SK-N-SH (cell line): ENCODE measurements at regions of chr9 and their contacts with region 1.

Region 1: GRCh38 chr9:137034863-137035761 is 3.2 kb upstream of the FUT7 start:
- DNase-seq: peak; percentile 93
- H3K4me3 ChIP-seq: peak overlapping the region in 1 of 2 experiments; percentile 20; a peak in 1 of 4 replicates
- H3K27ac ChIP-seq: peak overlapping the region in 1 of 2 experiments; percentile 39; a peak in 1 of 4 replicates
- H3K4me1 ChIP-seq: peaks cover 0 to 21% of the 10 kb centered on the region in 2 experiments; a peak in 1 of 4 replicates
- H3K27me3 ChIP-seq: no peaks in the 10 kb centered on the region
- CTCF ChIP-seq: peak; percentile 81
- EP300 ChIP-seq: no peak
- RAD21 ChIP-seq: peak; percentile 85

Region 2: GRCh38 chr9:136564379-136564988 is 470.6 kb before region 1 on chr9:
- CTCF ChIA-PET with region 1: no interaction called
- POLR2A ChIA-PET with region 1: no interaction called
- DNase-seq: no peak
- H3K4me3 ChIP-seq: no peak overlapping the region
- H3K27ac ChIP-seq: no peak overlapping the region
- H3K4me1 ChIP-seq: peaks cover 9 to 13% of the 10 kb centered on the region in 2 experiments; a peak in 3 of 4 replicates
- H3K27me3 ChIP-seq: no peaks in the 10 kb centered on the region
- CTCF ChIP-seq: no peak
- EP300 ChIP-seq: no peak
- RAD21 ChIP-seq: no peak

Region 3: DNA sequence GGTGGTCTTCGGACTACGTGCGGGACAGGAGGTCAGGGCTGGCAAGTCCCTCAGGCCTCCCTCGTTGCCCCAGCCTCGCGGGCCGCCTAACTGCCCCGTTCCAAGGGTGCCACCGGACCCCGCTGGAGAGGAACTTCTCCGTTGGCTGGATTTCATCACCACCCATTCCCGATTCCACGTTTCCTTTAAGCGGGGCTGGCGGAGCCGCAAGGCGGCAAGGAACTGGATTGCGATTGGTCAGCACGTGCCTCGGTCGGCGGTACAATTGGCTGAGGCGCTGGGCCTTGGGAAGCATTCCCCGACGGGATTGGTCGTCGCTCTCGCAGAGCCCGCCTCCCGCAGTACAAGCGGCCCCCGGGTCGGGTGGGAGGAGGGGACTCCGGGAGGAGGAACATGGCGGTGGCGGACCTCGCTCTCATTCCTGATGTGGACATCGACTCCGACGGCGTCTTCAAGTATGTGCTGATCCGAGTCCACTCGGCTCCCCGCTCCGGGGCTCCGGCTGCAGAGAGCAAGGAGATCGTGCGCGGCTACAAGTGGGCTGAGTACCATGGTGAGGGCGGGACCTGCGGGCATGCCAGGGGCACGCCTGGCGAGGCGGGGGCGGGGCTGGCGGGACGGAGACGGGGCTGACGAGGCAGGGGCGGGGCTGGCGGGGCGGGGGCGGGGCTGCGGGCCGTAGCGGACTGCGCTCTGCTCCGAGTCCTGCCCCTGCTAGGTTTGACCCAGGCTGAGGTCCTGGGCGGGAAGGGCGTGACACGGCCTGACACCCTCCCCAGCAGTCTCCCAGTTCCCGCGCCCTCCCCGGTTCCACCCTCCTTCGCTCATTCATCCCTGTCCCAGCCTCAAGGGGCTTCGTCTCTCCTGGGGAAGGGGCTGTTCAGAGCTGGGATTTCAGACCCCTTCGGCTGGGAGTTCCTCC is 185.8 kb before region 1 on chr9 and contains the start of gene PHPT1:
- CTCF ChIA-PET with region 1: interaction called, 21 read pairs
- POLR2A ChIA-PET with region 1: no interaction called
- DNase-seq: peak; percentile 99
- H3K4me3 ChIP-seq: peak within 1 kb of the TSS; percentile 89 to 97
- H3K27ac ChIP-seq: peak within 1 kb of the TSS; percentile 84 to 98
- H3K4me1 ChIP-seq: peaks cover 4 to 13% of the 10 kb centered on the region in 2 experiments; a peak in 2 of 4 replicates
- H3K27me3 ChIP-seq: no peaks in the 10 kb centered on the region
- CTCF ChIP-seq: no peak
- EP300 ChIP-seq: no peak
- RAD21 ChIP-seq: no peak
- polyA plus RNA-seq, gene PHPT1: 338 and 517 TPM in 2 replicates

Region 4: GRCh38 chr9:136981588-136982231 is 53.4 kb before region 1 on chr9:
- CTCF ChIA-PET with region 1: interaction called, 14 read pairs
- POLR2A ChIA-PET with region 1: no interaction called
- DNase-seq: no peak
- H3K4me3 ChIP-seq: no peak overlapping the region
- H3K27ac ChIP-seq: no peak overlapping the region
- H3K4me1 ChIP-seq: peaks cover 0 to 15% of the 10 kb centered on the region in 2 experiments; a peak in 1 of 4 replicates
- H3K27me3 ChIP-seq: no peaks in the 10 kb centered on the region
- CTCF ChIP-seq: no peak
- EP300 ChIP-seq: no peak
- RAD21 ChIP-seq: no peak

Region 5: DNA sequence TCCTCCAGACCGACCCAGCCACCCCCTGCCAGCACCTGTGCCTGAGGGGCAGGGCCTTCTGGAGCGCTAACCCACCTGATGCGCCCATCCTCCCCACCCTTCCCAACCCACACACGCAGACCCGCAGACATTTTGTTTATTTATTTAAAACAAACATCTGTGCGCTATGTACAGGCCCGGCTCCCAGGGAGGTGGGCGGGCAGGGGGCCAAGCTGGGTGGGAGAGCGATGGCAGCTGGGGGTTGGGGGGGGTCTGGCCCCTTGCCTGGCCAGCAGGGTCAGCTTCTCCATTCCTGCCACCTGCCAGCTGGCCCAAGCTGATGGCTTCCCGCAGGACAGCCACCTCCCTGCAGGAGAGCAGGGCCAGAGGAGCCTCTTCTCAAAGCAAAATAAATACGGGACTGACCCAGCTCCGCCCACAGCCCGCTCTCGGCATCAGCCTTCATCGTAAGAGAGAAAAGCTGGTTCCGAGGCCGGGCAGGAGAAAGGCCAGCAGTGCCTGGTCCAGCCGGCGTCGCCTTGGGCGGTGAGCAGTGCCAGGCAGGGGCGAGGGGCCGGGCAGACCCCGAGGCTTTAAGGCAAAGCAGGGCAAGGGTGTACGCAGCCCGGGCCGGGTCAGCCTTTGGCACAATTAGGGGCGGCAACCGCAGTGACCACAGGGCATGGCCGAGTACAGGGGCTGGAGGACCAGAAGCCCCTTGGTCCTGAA is 27.9 kb before region 1 on chr9:
- CTCF ChIA-PET with region 1: interaction called, 14 read pairs
- POLR2A ChIA-PET with region 1: no interaction called
- DNase-seq: no peak
- H3K4me3 ChIP-seq: no peak overlapping the region
- H3K27ac ChIP-seq: no peak overlapping the region; a peak in 1 of 4 replicates
- H3K4me1 ChIP-seq: no peaks in the 10 kb centered on the region
- H3K27me3 ChIP-seq: no peaks in the 10 kb centered on the region
- CTCF ChIP-seq: no peak
- EP300 ChIP-seq: no peak
- RAD21 ChIP-seq: no peak

Region 6: DNA sequence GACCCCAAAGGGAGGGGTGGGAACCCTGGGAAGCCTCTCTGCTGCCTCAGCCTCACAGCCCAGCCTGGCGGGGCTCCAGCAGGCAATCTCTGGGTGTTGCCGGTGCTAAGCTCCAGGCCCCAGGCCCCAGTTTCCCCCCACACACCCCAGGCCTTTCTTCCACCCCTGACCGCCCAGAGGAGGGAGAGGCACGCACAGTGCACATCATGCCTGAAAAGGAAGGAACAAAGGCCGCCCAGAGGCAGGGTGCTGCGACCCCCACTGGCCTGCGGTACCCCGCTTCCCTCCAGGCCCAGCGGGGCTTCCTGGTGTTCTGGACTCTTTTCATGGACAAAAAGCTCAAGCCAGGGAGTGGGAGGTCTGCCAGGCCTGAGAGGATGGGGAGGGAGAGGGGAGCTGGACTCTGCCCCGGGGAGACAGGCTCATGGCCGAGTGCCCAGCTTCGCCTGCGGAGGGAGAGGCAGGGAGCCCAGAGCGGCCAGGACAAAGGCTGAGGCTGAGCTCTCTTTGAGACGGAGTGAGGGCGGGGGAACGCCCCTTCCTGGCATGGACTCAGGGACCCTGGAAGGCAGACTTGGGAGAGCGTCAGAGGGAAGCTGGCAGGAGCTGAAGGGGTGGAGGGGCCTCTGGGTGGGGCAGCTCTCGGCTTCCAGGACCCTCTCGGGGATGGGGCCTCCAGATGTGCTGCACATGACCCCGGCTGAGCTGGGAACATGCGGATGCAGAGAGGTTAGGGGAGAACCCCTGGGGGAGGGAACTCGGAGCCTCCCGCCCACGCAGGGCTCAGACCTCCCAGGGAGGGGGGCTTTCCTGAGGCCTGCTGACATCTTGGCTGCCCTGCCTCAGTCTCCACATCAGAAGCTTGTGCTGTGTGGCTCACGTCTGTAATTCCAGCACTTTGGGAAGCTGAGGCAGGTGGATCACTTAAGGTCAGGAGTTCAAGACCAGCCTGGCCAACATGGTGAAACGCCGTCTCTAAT is 20.6 kb after region 1 on chr9:
- CTCF ChIA-PET with region 1: interaction called, 107 read pairs
- POLR2A ChIA-PET with region 1: no interaction called
- DNase-seq: peak; percentile 94
- H3K4me3 ChIP-seq: no peak overlapping the region
- H3K27ac ChIP-seq: peak overlapping the region; percentile 32 to 96; a peak in 3 of 4 replicates
- H3K4me1 ChIP-seq: peaks cover 0 to 29% of the 10 kb centered on the region in 2 experiments; a peak in 2 of 4 replicates
- H3K27me3 ChIP-seq: no peaks in the 10 kb centered on the region
- CTCF ChIP-seq: no peak
- EP300 ChIP-seq: peak in 1 of 2 experiments; percentile 66; a peak in 2 of 4 replicates
- RAD21 ChIP-seq: peak; percentile 20; the same call in 1 of the 2 replicates

Region 7: DNA sequence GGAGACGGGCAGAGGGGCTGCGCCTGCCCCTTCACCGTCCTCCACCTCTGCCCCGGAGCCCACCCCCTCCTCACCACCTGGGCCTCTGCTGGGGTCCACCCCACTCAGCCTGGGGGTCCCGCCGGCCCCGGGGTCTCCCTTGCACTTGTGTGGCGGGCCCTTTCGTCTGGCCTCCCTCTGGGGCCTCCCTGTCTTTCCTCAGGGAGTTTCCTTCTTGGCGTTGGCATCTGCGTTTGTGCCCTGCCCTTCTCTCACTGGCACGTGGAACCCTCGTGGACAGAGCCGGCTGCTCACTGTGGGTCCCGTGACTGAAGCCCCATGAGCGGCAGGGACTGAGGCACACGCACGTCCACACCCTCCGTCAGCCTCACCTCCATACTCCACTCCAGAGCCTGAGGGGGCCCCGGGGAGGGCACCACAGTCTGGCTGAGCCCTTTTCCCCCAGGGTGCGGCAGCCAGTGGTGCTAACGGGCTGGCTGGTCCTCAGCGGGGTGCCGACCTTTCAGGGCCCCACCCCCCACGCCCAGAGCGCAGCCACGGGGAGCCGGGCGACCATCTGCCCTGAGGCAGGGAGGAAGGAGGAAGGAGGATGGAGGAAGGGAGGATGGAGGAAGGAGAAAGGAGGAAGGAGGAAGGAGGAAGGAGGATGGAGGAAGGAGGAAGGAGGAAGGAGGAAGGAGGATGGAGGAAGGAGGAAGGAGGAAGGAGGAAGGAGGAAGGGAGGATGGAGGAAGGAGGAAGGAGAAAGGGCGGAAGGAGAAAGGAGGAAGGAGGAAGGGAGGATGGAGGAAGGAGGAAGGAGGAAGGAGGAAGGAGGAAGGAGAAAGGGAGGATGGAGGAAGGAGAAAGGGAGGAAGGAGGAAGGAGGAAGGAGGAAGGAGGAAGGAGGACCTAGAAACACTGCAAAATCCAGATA is 320.0 kb after region 1 on chr9:
- CTCF ChIA-PET with region 1: no interaction called
- POLR2A ChIA-PET with region 1: no interaction called
- DNase-seq: no peak
- H3K4me3 ChIP-seq: no peak overlapping the region
- H3K27ac ChIP-seq: no peak overlapping the region
- H3K4me1 ChIP-seq: no peaks in the 10 kb centered on the region
- H3K27me3 ChIP-seq: no peaks in the 10 kb centered on the region
- CTCF ChIP-seq: no peak
- EP300 ChIP-seq: no peak
- RAD21 ChIP-seq: no peak